Activated naive CD4-positive, alpha-beta T cell treated with anti-CD3 and anti-CD28 coated beads for 36 hours (primary cell): ENCODE measurements at regions of chr10 and their contacts with region 1.

Region 1: GRCh38 chr10:100518761-100519241 is 860 bp downstream of the SEC31B start:
- DNase-seq: peak; percentile 86
- H3K4me3 Mint-ChIP-seq: no peak overlapping the region
- H3K27ac Mint-ChIP-seq: no peak overlapping the region
- H3K4me1 Mint-ChIP-seq: peaks cover 12% of the 10 kb centered on the region
- H3K27me3 Mint-ChIP-seq: peaks cover 1% of the 10 kb centered on the region

Region 2: DNA sequence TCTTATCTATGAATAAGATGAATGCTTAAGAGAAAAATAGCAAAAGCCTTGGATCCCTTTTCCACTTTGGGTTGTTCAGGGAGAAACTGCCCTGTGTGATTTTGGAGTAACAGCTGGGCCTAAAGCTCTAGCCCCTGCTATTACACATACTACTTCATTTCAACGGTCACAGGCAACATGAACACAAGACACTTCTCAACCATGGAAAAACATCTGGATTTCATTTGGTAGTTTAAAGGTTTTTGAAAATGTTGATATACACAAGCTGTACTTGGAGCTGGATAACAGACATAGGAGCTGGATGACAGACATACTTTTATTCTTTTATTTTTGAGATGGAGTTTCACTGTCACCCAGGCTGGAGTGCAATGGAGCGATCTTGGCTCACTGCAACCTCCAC is 286.7 kb before region 1 on chr10:
- CTCF ChIA-PET with region 1: no interaction called
- intact Hi-C with region 1: no loop called
- DNase-seq: no peak
- H3K4me3 Mint-ChIP-seq: no peak overlapping the region
- H3K27ac Mint-ChIP-seq: no peak overlapping the region
- H3K4me1 Mint-ChIP-seq: peaks cover 22% of the 10 kb centered on the region
- H3K27me3 Mint-ChIP-seq: no peaks in the 10 kb centered on the region

Region 3: GRCh38 chr10:100338434-100339036 is 180.3 kb before region 1 on chr10:
- CTCF ChIA-PET with region 1: interaction called, 29 read pairs
- intact Hi-C with region 1: loop called (anchors 1 kb)
- DNase-seq: peak; percentile 91
- H3K4me3 Mint-ChIP-seq: no peak overlapping the region
- H3K27ac Mint-ChIP-seq: no peak overlapping the region
- H3K4me1 Mint-ChIP-seq: no peaks in the 10 kb centered on the region
- H3K27me3 Mint-ChIP-seq: no peaks in the 10 kb centered on the region

Region 4: DNA sequence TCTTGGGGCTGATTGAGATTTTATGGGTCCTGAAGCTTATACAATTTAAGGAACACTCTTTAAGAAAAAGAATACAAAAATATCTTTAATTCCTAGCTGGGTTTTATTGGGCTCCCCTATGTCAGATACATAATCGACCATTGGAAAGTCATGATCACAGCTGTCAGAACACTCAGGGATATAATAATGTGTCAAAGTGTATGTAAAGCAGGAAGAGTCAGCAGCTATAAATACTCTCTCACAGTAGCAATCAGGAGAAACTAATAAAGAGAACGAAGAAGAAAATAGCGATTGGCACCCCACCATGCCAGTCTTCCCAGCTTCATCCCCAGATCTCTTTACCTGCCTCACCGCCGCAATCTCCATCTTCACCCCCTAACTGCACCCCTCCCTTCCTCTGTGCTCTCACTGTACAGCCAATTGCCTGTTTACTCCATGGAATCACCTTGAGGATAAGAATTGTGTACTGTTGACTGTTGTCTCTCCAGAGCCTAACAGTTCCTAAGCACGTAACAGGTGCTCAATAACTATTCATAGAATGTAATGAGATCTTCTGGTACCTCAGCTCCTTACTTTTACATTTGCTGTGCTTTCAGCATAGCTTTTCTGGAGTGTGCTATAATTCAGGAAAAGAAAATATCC is 80.0 kb before region 1 on chr10:
- CTCF ChIA-PET with region 1: interaction called, 29 read pairs
- intact Hi-C with region 1: loop called (anchors 1 kb)
- DNase-seq: no peak
- H3K4me3 Mint-ChIP-seq: no peak overlapping the region
- H3K27ac Mint-ChIP-seq: no peak overlapping the region
- H3K4me1 Mint-ChIP-seq: no peaks in the 10 kb centered on the region
- H3K27me3 Mint-ChIP-seq: no peaks in the 10 kb centered on the region

Region 5: GRCh38 chr10:100501423-100501822 is 17.4 kb before region 1 on chr10:
- CTCF ChIA-PET with region 1: interaction called, 10 read pairs
- intact Hi-C with region 1: no loop called
- DNase-seq: no peak
- H3K4me3 Mint-ChIP-seq: no peak overlapping the region
- H3K27ac Mint-ChIP-seq: no peak overlapping the region
- H3K4me1 Mint-ChIP-seq: peaks cover 11% of the 10 kb centered on the region
- H3K27me3 Mint-ChIP-seq: no peaks in the 10 kb centered on the region

Region 6: GRCh38 chr10:100535715-100536353 is 17.0 kb after region 1 on chr10 and contains the start of gene HIF1AN:
- CTCF ChIA-PET with region 1: interaction called, 12 read pairs
- intact Hi-C with region 1: no loop called
- DNase-seq: peak; percentile 95
- H3K4me3 Mint-ChIP-seq: no peak within 1 kb of the TSS
- H3K27ac Mint-ChIP-seq: peak within 1 kb of the TSS; percentile 26
- H3K4me1 Mint-ChIP-seq: peaks cover 18% of the 10 kb centered on the region
- H3K27me3 Mint-ChIP-seq: no peaks in the 10 kb centered on the region
- total RNA-seq, gene HIF1AN: 34.6 to 38.4 TPM

Region 7: GRCh38 chr10:101095542-101096213 is 576.9 kb after region 1 on chr10:
- CTCF ChIA-PET with region 1: no interaction called
- intact Hi-C with region 1: no loop called
- DNase-seq: peak; percentile 86
- H3K4me3 Mint-ChIP-seq: no peak overlapping the region
- H3K27ac Mint-ChIP-seq: no peak overlapping the region
- H3K4me1 Mint-ChIP-seq: no peaks in the 10 kb centered on the region
- H3K27me3 Mint-ChIP-seq: peaks cover 39% of the 10 kb centered on the region